ENCODE measurements at regions of chr20 and their contacts with region 1.

Region 1: DNA sequence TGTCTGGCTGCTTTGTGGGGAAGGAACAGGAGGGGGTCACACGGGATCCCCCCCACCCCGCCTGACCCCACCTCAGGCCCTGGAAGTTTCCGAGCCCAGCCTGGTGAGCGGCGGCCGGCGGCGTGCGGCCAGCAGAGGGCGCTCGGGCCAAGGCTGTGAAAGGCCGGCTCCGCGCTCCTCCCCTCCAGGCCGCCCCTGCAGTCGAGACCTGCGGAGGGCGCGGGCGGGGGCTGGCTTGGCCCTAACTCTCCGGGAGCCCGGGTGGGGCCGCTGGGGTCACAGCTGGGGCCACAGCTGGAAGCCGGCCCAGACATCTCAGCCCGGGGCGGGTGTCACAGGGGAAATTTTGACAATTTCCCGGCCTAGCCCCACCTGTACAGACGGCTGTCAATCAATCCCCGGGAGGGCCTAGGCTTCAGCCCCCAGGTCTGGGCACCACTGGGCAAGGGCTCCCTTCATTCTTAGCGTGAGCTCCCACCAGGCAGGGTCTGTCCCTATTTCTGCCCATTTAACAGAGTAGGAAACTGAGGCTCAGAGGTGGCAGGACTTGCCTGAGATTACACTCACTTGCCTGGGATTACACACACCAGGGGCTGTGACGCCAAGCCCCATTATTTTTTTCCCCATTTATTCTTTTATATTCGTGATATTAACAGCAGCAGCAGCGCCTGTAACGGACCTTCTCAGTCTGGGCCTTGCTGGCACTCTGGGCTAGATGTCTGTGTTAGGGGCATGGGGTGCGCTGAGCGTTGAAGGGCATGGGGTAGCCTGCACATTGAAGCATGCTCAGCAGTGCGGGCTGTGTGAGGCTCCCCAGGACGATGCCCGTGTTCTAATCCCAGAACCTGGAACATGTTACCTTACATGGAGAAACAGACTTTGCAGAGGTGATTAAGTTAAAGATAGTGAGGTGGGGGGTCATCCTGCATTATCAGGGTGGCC is 23.0 kb downstream of the ZBP1 start:
- H3K4me3 Mint-ChIP-seq: no peak overlapping the region
- H3K27ac Mint-ChIP-seq: no peak overlapping the region
- H3K4me1 Mint-ChIP-seq: no peaks in the 10 kb centered on the region
- H3K27me3 Mint-ChIP-seq: peaks cover 44% of the 10 kb centered on the region

Region 2: DNA sequence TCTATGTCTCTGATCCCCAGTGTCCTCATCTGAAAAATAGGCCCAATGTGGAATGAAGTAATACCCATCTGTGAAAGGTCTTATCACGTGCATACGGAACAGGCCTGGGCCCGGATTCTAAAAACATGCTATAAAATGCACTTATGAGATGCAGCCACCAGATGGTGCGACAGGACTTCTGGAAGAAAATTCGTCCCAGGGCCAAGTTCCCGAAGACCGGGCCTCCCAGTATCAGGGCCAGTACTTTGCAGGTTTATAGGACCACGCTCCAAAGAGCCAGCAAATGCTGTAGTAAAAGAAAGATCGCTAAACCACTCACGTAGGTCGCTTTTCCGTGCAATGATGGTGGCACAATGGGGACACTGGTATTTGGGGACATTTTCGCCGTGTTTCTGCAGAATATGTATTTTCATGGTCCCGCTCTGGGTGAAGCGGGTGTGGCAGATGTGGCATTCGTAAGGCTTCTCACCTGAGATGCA is 83.0 kb before region 1 on chr20:
- intact Hi-C with region 1: loop called (anchors 1 kb)
- H3K4me3 Mint-ChIP-seq: no peak overlapping the region
- H3K27ac Mint-ChIP-seq: no peak overlapping the region
- H3K4me1 Mint-ChIP-seq: no peaks in the 10 kb centered on the region
- H3K27me3 Mint-ChIP-seq: peaks cover 37% of the 10 kb centered on the region

Region 3: DNA sequence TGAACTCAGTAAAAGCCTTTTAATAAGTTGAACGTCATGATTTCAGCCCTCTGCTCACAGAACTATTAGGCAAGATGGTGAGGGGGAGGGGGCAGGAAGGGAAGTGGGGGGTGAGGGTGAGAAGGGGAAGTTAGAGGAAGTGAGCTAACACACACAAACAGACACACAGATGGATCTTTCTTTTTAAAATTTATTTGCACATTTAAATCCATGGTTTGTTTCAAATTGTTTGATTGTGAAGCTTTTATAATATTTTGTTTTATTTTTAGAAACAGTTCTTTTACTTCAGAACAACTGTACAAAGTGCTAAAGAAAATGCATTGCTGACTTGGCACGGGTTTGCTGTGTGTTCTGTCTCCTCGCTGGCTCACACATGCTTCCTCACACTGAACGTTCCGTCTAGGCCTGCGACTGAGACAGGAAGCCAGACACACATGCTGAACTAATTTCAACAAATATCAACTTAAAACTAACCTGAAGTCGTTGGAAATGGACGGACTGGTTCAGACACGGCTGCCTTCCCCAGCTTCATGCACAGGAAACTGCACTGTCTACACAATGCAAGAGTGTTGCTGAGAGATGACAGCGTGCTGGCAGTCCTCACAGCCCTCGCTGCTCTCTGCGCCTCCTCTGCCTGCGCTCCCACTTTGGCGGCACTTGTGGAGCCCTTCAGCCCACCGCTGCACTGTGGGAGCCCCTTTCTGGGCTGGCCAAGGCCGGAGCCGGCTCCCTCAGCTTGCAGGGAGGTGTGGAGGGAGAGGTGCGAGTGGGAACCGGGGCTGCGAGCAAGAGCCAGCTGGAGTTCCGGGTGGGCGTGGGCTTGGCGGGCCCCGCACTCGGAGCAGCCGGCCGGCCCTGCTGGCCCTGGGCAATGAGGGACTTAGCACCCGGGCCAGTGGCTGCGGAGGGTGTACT is 31.0 kb after region 1 on chr20:
- intact Hi-C with region 1: no loop called
- H3K4me3 Mint-ChIP-seq: no peak overlapping the region
- H3K27ac Mint-ChIP-seq: peak overlapping the region; percentile 84
- H3K4me1 Mint-ChIP-seq: peaks cover 38% of the 10 kb centered on the region
- H3K27me3 Mint-ChIP-seq: peaks cover 7% of the 10 kb centered on the region

Region 4: DNA sequence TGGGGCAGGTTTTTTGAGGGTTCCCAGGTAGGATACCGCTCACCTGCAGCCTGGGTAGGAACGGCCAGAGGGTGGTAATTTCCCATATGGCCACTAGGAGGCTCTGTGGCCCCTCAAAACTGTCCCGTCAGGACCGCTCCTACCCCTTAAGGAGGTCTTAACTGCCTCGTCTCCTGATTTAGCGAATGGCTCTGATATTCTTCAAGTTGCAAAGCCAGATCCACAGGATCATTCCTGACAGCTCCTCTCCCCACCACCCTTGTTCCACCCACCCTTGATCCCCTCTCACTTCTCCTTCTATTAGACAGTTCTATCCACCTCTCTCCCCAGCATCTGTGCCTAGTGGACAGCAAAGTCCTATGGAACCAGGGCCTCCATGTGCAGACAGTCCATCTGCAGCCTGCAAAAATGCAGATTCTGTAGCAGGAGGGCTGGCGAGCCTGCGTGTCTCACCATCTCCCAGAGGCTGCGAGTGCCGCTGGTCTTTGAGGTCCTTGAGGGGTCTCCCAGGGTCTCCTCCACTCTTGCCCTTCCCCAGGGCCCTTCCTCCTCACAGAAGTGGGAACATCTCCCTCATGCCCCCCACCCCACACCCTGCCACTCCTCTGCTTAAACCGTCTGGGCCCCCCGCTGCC is 57.2 kb after region 1 on chr20:
- intact Hi-C with region 1: no loop called
- H3K4me3 Mint-ChIP-seq: no peak overlapping the region
- H3K27ac Mint-ChIP-seq: no peak overlapping the region
- H3K4me1 Mint-ChIP-seq: peaks cover 5% of the 10 kb centered on the region
- H3K27me3 Mint-ChIP-seq: peaks cover 9% of the 10 kb centered on the region

Region 5: GRCh38 chr20:57738481-57738880 is 141.2 kb after region 1 on chr20:
- intact Hi-C with region 1: no loop called
- H3K4me3 Mint-ChIP-seq: no peak overlapping the region
- H3K27ac Mint-ChIP-seq: no peak overlapping the region
- H3K4me1 Mint-ChIP-seq: no peaks in the 10 kb centered on the region
- H3K27me3 Mint-ChIP-seq: peaks cover 9% of the 10 kb centered on the region

Region 6: DNA sequence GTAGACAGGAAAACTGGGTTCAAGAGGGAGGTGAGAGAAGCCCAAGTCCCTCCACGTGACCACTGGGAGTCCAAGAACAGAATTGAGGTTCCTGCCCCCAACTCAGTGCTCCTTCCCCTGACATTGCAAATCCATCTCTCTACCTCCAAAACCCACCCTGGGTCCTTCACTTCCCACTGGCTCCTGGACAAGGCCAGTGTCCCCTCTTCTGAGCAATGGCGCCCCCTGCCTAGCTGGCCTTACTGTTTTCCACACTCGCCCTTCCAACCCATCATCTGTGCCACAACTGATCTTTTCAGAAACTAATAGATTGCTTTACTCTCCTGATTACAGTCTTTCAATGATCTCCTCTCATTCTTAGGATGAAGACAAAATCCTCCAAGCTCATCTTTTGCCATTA is 430.9 kb after region 1 on chr20:
- intact Hi-C with region 1: loop called (anchors 5 kb)
- H3K4me3 Mint-ChIP-seq: no peak overlapping the region
- H3K27ac Mint-ChIP-seq: no peak overlapping the region
- H3K4me1 Mint-ChIP-seq: no peaks in the 10 kb centered on the region
- H3K27me3 Mint-ChIP-seq: peaks cover 16% of the 10 kb centered on the region

Region 7: GRCh38 chr20:58179432-58180099 is 582.3 kb after region 1 on chr20:
- intact Hi-C with region 1: loop called (anchors 2 kb)
- H3K4me3 Mint-ChIP-seq: peak overlapping the region; percentile 54
- H3K27ac Mint-ChIP-seq: no peak overlapping the region
- H3K4me1 Mint-ChIP-seq: peaks cover 14% of the 10 kb centered on the region
- H3K27me3 Mint-ChIP-seq: peaks cover 46% of the 10 kb centered on the region

Region 8: GRCh38 chr20:58209652-58210397 is 612.6 kb after region 1 on chr20:
- intact Hi-C with region 1: loop called (anchors 2 kb)
- H3K4me3 Mint-ChIP-seq: no peak overlapping the region
- H3K27ac Mint-ChIP-seq: no peak overlapping the region
- H3K4me1 Mint-ChIP-seq: peaks cover 7% of the 10 kb centered on the region
- H3K27me3 Mint-ChIP-seq: peaks cover 26% of the 10 kb centered on the region

Measured in dendritic cell treated with granulocyte-macrophage colony-stimulating factor and Interleukin-4, amounts not matched to agents 40 ng/mL and 50 ng/mL, for 4 days (primary cell).